Right ventricle myocardium inferior (tissue), 1 donor: ENCODE measurements at regions of chr11 and their contacts with region 1.

Region 1: DNA sequence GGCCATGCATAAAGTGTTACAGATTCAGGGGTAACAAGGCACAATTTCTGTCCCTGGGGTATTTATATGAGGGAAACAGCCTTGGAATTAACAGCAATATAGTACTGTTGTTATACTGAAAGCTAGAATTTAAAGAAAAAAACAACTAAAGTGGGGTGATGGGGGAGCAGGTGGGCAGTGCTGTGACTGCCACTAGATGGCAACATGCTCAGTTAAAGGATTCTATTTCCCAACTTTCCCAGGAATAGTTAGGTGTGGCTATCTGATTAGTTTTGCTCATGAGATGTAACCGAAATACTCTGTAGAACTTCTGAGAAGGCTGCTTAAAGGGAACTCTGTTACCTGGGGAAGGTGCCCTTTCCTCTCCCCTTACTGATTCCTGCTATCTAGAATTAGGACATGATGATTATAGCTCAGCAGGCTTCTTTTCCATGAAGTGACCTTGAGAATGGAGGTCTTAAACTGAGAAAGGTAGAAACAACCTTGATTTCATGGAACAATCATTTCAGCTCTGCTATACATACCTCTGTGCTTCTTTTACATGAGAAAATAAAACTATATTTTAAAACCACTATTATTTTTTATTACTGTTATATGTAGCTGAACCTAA is 102.6 kb downstream of the RELT start:
- DNase-seq: no peak
- ATAC-seq: no peak

Region 2: GRCh38 chr11:73597956-73598718 is 119.3 kb after region 1 on chr11 and contains the start of gene FAM168A:
- intact Hi-C with region 1: loop called (anchors 5 kb)
- DNase-seq: peak; percentile 99
- ATAC-seq: peak; percentile 99
- total RNA-seq, gene FAM168A: 26.2 TPM